H1 (cell line): ENCODE measurements at regions of chr9 and their contacts with region 1.

Region 1: GRCh38 chr9:16257604-16258003 is 612.9 kb downstream of the BNC2 start:
- DNase-seq: no peak
- H3K4me3 ChIP-seq: no peak overlapping the region
- H3K27ac ChIP-seq: no peak overlapping the region
- H3K4me1 ChIP-seq: peaks cover 0 to 6% (median 2%) of the 10 kb centered on the region in 4 experiments; a peak in 5 of 7 replicates
- H3K27me3 ChIP-seq: no peaks in the 10 kb centered on the region; a peak in 1 of 7 replicates
- CTCF ChIP-seq: peak; percentile 21 to 75 (median 47)
- EP300 ChIP-seq: no peak
- POLR2A ChIP-seq: no peak
- RAD21 ChIP-seq: peak; percentile 41 to 49

Region 2: GRCh38 chr9:16131264-16131663 is 126.3 kb before region 1 on chr9:
- CTCF ChIA-PET with region 1: no interaction called
- POLR2A ChIA-PET with region 1: no interaction called
- DNase-seq: no peak
- H3K4me3 ChIP-seq: no peak overlapping the region
- H3K27ac ChIP-seq: no peak overlapping the region
- H3K4me1 ChIP-seq: no peaks in the 10 kb centered on the region
- H3K27me3 ChIP-seq: no peaks in the 10 kb centered on the region; a peak in 1 of 7 replicates
- CTCF ChIP-seq: peak; percentile 22 to 70 (median 60)
- EP300 ChIP-seq: no peak
- POLR2A ChIP-seq: no peak
- RAD21 ChIP-seq: peak; percentile 83 to 89

Region 3: DNA sequence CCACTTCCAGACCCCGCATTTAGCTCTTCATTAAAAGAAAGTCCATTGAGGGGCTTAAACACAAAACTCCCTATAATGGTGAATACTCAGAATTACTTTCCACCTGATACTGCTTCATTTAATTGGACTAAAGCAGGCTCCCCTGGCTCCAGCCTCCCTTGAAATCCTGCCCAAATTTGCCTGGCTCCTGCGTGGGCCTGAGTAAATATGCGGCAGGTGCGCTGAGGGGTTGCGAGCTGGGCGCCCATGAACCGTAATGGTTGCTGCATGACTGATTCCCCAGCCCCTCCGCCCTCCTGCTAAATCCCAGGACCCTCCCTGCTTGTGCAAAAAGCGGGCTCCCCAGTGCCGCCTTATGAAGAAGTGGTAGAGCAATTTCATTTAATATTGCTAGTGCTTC is 26.9 kb before region 1 on chr9:
- CTCF ChIA-PET with region 1: interaction called, 19 read pairs
- POLR2A ChIA-PET with region 1: no interaction called
- DNase-seq: no peak
- H3K4me3 ChIP-seq: no peak overlapping the region
- H3K27ac ChIP-seq: no peak overlapping the region
- H3K4me1 ChIP-seq: no peaks in the 10 kb centered on the region
- H3K27me3 ChIP-seq: no peaks in the 10 kb centered on the region
- CTCF ChIP-seq: no peak
- EP300 ChIP-seq: no peak
- POLR2A ChIP-seq: no peak
- RAD21 ChIP-seq: no peak

Region 4: GRCh38 chr9:16247188-16247875 is 10.3 kb before region 1 on chr9:
- CTCF ChIA-PET with region 1: interaction called, 76 read pairs
- POLR2A ChIA-PET with region 1: no interaction called
- DNase-seq: no peak
- H3K4me3 ChIP-seq: no peak overlapping the region
- H3K27ac ChIP-seq: no peak overlapping the region
- H3K4me1 ChIP-seq: peaks cover 0 to 9% (median under 1%) of the 10 kb centered on the region in 4 experiments; a peak in 4 of 7 replicates
- H3K27me3 ChIP-seq: no peaks in the 10 kb centered on the region
- CTCF ChIP-seq: no peak
- EP300 ChIP-seq: no peak
- POLR2A ChIP-seq: no peak
- RAD21 ChIP-seq: no peak

Region 5: DNA sequence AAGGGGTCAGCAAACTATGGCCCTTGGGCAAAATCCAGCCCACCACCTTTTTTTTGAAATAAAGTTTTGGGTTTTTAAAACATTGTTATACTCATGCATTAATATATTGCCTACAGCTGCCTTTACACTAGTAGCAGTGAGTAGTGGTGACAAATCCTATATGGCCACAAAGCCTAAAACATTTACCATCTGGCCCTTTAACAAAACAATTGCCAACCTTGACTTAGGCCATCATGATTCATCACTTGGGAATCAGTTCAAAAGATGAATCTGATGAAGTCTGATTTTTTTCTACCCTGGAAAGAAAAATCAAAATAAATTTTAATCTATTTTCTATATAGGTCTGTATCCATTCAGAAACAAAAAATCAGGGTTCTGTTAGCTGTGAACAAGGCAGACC is 128.0 kb after region 1 on chr9:
- CTCF ChIA-PET with region 1: no interaction called
- POLR2A ChIA-PET with region 1: no interaction called
- DNase-seq: no peak
- H3K4me3 ChIP-seq: no peak overlapping the region
- H3K27ac ChIP-seq: no peak overlapping the region
- H3K4me1 ChIP-seq: no peaks in the 10 kb centered on the region
- H3K27me3 ChIP-seq: no peaks in the 10 kb centered on the region
- CTCF ChIP-seq: no peak
- EP300 ChIP-seq: no peak
- POLR2A ChIP-seq: no peak
- RAD21 ChIP-seq: no peak